B cell (primary cell): ENCODE measurements at regions of chr22 and their contacts with region 1.

Region 1: GRCh38 chr22:22587577-22588188 is 28.6 kb upstream of the PRAME start:
- DNase-seq: no peak
- ATAC-seq: no peak
- H3K4me3 ChIP-seq: no peak overlapping the region
- H3K4me3 Mint-ChIP-seq: no peak overlapping the region
- H3K27ac ChIP-seq: peak overlapping the region in 1 of 2 donors; percentile 23
- H3K27ac Mint-ChIP-seq: no peak overlapping the region
- H3K4me1 ChIP-seq: peaks cover 36 to 38% of the 10 kb centered on the region in 2 donors
- H3K4me1 Mint-ChIP-seq: peaks cover 33% of the 10 kb centered on the region
- H3K27me3 ChIP-seq: no peaks in the 10 kb centered on the region
- H3K27me3 Mint-ChIP-seq: no peaks in the 10 kb centered on the region
- CTCF ChIP-seq: no peak

Region 2: GRCh38 chr22:22357024-22357883 is 230.4 kb before region 1 on chr22:
- CTCF ChIA-PET with region 1: interaction called, 11 read pairs
- POLR2A ChIA-PET with region 1: no interaction called
- intact Hi-C with region 1: loop called (anchors 5 kb)
- DNase-seq: peak; percentile 93
- ATAC-seq: peak; percentile 90
- H3K4me3 ChIP-seq: peak overlapping the region in 3 of 5 experiments; percentile 18 to 27 (median 26)
- H3K4me3 Mint-ChIP-seq: peak overlapping the region; percentile 65
- H3K27ac ChIP-seq: peak overlapping the region; percentile 61 to 71
- H3K27ac Mint-ChIP-seq: peak overlapping the region; percentile 90
- H3K4me1 ChIP-seq: peaks cover 29 to 49% of the 10 kb centered on the region in 2 donors
- H3K4me1 Mint-ChIP-seq: peaks cover 59% of the 10 kb centered on the region
- H3K27me3 ChIP-seq: no peaks in the 10 kb centered on the region
- H3K27me3 Mint-ChIP-seq: no peaks in the 10 kb centered on the region
- CTCF ChIP-seq: peak; percentile 72

Region 3: DNA sequence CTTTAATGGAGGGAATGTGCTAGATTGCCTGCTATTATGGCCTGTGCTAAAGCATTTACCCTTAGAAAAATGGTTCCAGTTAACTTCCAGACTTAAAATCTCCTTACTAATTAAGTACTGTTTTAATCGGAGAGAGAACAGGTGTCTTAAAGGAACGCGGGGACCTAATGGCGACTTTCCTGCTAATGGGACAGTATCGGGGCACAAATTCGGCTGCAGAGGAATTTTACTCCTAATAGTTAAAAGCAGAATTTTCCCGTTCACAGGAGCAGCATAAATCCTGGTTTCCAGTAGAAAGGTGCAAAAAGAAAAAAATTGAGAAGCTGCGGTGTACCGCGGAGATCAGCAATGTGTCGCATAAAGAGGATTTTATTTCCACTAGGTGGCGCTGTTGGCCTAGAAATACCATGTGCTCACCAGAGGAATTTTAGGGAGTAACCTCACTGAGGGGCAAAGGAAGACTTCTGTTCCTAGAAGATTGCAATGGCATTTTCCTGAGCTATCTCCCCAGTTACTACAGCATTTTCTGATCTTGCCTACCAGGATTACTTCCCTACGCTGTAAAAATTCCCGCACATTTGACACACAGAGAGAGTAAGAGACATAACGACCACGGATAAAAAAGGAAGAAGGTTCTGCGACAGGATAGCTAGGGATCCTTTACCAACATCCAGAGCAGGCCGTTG is 123.7 kb before region 1 on chr22:
- CTCF ChIA-PET with region 1: interaction called, 22 read pairs
- POLR2A ChIA-PET with region 1: no interaction called
- intact Hi-C with region 1: loop called (anchors 5 kb)
- DNase-seq: peak; percentile 84
- ATAC-seq: peak; percentile 47
- H3K4me3 ChIP-seq: peak overlapping the region in 1 of 5 experiments; percentile 46
- H3K4me3 Mint-ChIP-seq: no peak overlapping the region
- H3K27ac ChIP-seq: no peak overlapping the region
- H3K27ac Mint-ChIP-seq: peak overlapping the region; percentile 16
- H3K4me1 ChIP-seq: peaks cover 13 to 15% of the 10 kb centered on the region in 2 donors
- H3K4me1 Mint-ChIP-seq: peaks cover 19% of the 10 kb centered on the region
- H3K27me3 ChIP-seq: no peaks in the 10 kb centered on the region
- H3K27me3 Mint-ChIP-seq: peaks cover 3% of the 10 kb centered on the region
- CTCF ChIP-seq: peak; percentile 88

Region 4: DNA sequence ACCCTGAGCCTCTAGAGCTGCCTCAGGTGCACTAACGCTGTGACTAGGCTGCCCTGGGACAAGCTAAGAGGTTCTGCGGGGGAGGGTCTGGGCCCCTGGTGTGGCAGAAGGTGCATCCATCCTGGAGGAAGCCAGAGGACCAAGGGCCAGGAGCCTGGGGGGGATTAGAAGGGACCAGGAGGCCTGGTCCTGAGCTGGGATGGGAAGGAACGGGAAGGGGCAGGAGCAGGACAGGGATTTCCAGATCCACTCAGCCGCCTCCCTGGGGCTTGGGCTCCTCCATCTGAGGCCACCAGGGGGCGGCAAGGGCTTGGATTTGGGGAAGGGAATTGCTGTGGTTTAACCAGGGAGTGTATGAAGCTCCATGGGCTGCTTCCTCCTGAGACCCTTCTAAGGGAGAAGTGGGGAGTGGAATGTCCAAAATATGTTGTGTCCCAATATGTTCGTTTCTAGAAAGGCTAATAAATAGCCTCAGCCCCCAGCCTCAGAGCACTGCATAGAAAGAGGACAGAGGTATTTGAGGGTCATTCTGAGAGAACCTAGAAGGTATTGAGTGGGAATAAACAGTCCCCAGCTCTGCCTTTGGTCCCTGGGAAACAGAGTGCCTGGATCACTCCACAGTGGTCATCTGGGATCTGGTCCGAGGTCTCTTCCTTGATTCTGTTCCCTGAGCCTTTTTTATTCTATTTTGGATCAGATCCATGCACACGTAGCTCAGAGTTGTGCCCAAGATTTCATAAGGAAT is 11.3 kb before region 1 on chr22:
- CTCF ChIA-PET with region 1: interaction called, 41 read pairs
- POLR2A ChIA-PET with region 1: interaction called, 3 read pairs
- intact Hi-C with region 1: no loop called
- DNase-seq: peak; percentile 56
- ATAC-seq: peak; percentile 49
- H3K4me3 ChIP-seq: no peak overlapping the region
- H3K4me3 Mint-ChIP-seq: no peak overlapping the region
- H3K27ac ChIP-seq: no peak overlapping the region
- H3K27ac Mint-ChIP-seq: no peak overlapping the region
- H3K4me1 ChIP-seq: peaks cover 0 to 15% of the 10 kb centered on the region in 2 donors
- H3K4me1 Mint-ChIP-seq: peaks cover 10% of the 10 kb centered on the region
- H3K27me3 ChIP-seq: peaks cover 0 to 2% (median 0%) of the 10 kb centered on the region in 4 experiments
- H3K27me3 Mint-ChIP-seq: peaks cover 8% of the 10 kb centered on the region
- CTCF ChIP-seq: peak; percentile 84

Region 5: DNA sequence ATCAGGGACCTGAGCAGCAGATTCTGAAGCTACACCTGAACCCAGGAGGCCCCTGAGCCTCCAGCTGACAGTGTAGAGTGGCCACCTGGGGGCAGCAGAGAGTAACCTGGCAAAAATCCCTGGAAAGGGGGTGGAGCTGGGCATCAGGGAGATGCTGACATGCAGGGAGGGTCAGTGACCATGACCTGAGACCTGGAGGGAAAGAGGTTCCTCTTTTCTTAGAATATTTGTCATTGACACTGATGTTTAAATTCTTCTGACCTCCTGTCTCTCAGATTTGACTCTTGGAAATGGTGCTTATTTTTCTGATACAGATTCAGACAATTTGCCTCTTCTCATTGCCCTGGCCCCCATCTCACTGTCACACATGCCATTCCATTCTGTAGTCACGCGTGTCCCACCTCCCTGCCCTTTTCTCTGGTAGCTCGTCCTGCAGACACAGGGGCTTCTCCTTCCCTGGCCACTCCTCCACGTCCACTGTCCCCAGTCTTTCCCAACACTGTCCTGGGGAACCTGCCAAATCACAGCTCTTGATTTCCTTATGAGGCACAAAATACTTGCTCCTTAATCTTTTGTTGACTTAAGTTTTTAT is 182.7 kb after region 1 on chr22:
- CTCF ChIA-PET with region 1: no interaction called
- POLR2A ChIA-PET with region 1: no interaction called
- intact Hi-C with region 1: no loop called
- DNase-seq: peak; percentile 60
- ATAC-seq: no peak
- H3K4me3 ChIP-seq: no peak overlapping the region
- H3K4me3 Mint-ChIP-seq: no peak overlapping the region
- H3K27ac ChIP-seq: no peak overlapping the region
- H3K27ac Mint-ChIP-seq: peak overlapping the region; percentile 47
- H3K4me1 ChIP-seq: peaks cover 22 to 39% of the 10 kb centered on the region in 2 donors
- H3K4me1 Mint-ChIP-seq: peaks cover 32% of the 10 kb centered on the region
- H3K27me3 ChIP-seq: peaks cover 0 to 10% (median 3%) of the 10 kb centered on the region in 4 experiments
- H3K27me3 Mint-ChIP-seq: peaks cover 28% of the 10 kb centered on the region
- CTCF ChIP-seq: peak; percentile 67